AG04450 (cell line): ENCODE measurements at regions of chr1 and their contacts with region 1.

Region 1: DNA sequence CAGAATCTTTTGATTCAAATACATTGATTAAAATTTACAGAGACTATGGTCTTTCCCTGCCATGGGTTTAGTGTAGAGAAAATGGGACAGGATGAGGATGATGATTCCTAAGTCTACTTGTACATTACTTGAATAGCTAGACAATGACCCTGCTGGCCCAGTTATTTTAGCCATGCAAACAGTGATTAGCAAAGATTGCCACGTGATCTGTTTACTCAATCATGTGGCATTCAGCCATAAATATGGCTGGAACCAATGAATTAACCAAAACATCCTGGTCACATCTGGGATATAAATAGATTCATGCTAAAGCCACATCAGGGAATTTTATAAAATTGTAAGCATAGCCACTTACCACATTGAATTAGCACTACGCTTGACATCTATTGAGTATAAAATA is 167.3 kb downstream of the PBX1 start:
- DNase-seq: peak; percentile 85
- H3K4me3 ChIP-seq: no peak overlapping the region
- H3K27ac ChIP-seq: no peak overlapping the region
- H3K27me3 ChIP-seq: no peaks in the 10 kb centered on the region
- CTCF ChIP-seq: no peak

Region 2: DNA sequence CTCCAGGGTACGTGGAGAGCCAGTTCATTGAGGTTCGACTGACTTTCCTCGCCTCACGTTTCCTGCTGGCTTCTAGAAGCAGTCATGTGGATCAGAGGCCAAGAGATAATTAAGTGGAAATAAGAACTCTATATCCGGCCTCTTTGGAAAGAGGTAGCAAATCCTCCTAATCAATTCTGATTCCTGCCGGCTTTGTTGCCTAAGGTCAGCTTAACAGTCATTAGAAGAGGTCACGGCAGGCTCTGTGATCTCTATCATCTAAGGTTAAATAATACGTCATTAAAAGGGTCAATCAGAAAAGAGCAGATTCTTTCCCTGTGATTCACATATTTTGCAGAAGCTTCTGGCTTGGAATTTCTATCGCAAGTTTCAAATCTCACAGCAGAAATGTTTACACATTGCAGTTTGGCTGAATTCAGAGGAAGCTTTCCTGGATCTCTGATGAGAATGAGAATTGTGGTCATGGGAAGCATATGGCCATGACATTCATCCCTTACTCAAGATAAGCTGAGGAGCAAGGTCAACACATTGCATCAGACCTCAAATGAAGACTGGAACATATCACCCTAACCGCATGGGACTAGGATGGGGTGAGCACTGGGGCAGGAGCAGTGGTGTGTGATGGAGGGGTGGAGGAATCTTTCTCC is 22.1 kb after region 1 on chr1:
- CTCF ChIA-PET with region 1: no interaction called
- POLR2A ChIA-PET with region 1: interaction called, 12 read pairs
- DNase-seq: peak; percentile 92
- H3K4me3 ChIP-seq: no peak overlapping the region
- H3K27ac ChIP-seq: peak overlapping the region; percentile 92
- H3K27me3 ChIP-seq: no peaks in the 10 kb centered on the region
- CTCF ChIP-seq: no peak